Sigmoid colon (tissue), 7 donors: ENCODE measurements at regions of chr3 and their contacts with region 1.

Region 1: DNA sequence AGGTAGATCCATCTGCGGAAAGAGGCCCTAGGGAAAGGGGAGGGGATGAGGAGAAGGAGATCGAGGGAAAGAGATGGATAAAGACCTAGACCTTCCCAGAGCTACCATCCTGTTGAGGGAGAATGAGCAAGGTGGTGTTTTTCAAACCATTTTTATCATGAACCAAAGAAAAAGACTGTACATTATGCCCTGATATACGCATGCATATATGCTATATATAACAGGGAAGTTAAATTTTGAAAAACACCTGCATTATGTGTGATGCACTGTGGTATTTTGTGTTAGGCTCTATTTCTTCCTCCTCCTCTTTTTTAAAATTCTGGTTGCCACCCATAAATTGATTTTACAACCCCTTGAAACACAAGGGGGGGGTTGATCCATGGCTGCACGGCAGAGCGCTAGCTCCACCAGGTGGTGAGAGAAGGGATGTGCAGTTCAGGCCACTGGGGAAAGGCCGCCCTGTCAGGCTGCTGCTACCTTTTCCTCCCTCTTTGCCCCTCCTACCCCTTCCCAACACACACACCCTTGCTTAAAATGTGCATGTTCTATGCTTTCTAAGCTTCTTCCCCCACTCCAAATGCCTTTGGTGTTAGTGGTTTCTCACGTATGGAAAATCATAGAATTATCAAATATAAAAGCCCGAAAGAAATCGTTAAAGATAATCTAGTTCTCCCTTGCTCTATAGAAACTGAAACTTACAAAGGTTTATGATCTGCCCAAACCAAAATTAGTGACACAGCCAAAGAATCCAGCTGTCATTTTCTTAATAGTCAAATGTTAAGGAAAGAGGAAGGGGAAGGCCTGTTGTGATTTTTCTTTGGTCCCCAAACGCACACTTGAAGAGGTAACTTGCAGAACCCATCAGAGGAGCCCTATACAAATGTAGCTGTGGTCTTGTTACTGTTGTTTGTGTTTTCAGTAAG is 262.0 kb upstream of the UMPS start:
- DNase-seq: no peak
- H3K4me3 ChIP-seq: no peak overlapping the region
- H3K27ac ChIP-seq: no peak overlapping the region
- H3K4me1 ChIP-seq: no peaks in the 10 kb centered on the region
- H3K27me3 ChIP-seq: no peaks in the 10 kb centered on the region
- CTCF ChIP-seq: peak; percentile 39 to 92 (median 88)
- EP300 ChIP-seq: no peak
- POLR2A ChIP-seq: no peak

Region 2: DNA sequence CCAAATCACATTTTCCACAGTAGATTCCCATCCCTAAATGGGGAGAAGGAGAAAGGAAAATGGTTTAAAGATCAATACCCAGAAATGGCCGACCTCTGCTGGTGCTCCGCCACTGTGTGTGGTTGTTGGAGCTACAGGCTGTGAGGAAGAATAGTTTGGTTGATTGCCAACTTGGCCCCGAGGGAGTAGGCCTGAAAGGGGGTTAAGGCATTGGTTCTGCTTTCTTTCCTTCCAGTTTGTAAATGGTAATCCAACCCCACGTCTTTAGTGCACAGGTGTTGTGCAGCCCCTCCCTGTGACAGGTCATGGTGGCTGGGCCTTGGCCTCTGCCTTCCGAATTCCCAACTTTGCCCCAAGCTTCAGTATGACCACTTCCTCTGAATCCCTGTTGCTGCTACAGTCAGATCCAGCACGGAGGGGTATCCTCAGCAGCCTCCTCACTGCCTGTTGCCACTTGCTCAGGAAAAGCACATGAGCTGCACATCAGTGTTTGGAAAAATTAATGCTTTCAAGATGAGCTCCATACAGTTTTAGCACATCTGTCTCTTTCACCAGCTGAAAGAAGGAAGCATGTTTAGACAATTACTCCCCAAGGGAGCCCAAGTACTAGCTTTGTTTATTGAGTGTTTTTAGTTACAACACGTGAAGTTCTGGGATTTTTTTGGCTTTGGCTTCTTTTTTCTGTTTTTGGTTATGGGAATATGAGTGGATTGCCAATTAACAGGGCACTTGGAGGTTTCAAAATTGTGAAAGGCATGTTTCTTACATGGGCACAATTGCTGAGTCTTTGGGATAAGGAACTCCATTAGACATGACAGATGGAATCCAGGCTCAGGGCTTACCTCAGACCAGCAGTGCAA is 384.0 kb before region 1 on chr3:
- intact Hi-C with region 1: loop called (anchors 5 kb)
- DNase-seq: no peak
- H3K4me3 ChIP-seq: no peak overlapping the region
- H3K27ac ChIP-seq: peak overlapping the region in 1 of 4 donors; percentile 39
- H3K4me1 ChIP-seq: no peaks in the 10 kb centered on the region
- H3K27me3 ChIP-seq: no peaks in the 10 kb centered on the region
- CTCF ChIP-seq: no peak
- EP300 ChIP-seq: no peak
- POLR2A ChIP-seq: no peak

Region 3: GRCh38 chr3:124351430-124352148 is 116.7 kb before region 1 on chr3:
- intact Hi-C with region 1: loop called (anchors 10 kb)
- DNase-seq: no peak
- H3K4me3 ChIP-seq: no peak overlapping the region
- H3K27ac ChIP-seq: peak overlapping the region in 2 of 4 donors; percentile 36 to 63
- H3K4me1 ChIP-seq: peaks cover 0 to 28% (median 5%) of the 10 kb centered on the region in 4 donors
- H3K27me3 ChIP-seq: no peaks in the 10 kb centered on the region
- CTCF ChIP-seq: peak in 3 of 4 experiments; percentile 28 to 39 (median 32)
- EP300 ChIP-seq: no peak
- POLR2A ChIP-seq: no peak

Region 4: GRCh38 chr3:124951511-124952281 is 483.5 kb after region 1 on chr3:
- intact Hi-C with region 1: no loop called
- DNase-seq: no peak
- H3K4me3 ChIP-seq: no peak overlapping the region
- H3K27ac ChIP-seq: no peak overlapping the region
- H3K4me1 ChIP-seq: no peaks in the 10 kb centered on the region
- H3K27me3 ChIP-seq: no peaks in the 10 kb centered on the region
- CTCF ChIP-seq: no peak
- EP300 ChIP-seq: no peak
- POLR2A ChIP-seq: no peak